ENCODE measurements at regions of chr9 and their contacts with region 1.

Region 1: GRCh38 chr9:93095205-93096130 is 549 bp upstream of the CARD19 start:
- DNase-seq: peak; percentile 98
- ATAC-seq: peak; percentile 85
- H3K4me3 ChIP-seq: peak overlapping the region; percentile 51
- H3K27ac ChIP-seq: peak overlapping the region; percentile 90
- H3K4me1 ChIP-seq: peaks cover 31% of the 10 kb centered on the region
- H3K27me3 ChIP-seq: no peaks in the 10 kb centered on the region
- CTCF ChIP-seq: no peak
- POLR2A ChIP-seq: peak; percentile 83
- RAD21 ChIP-seq: no peak

Region 2: DNA sequence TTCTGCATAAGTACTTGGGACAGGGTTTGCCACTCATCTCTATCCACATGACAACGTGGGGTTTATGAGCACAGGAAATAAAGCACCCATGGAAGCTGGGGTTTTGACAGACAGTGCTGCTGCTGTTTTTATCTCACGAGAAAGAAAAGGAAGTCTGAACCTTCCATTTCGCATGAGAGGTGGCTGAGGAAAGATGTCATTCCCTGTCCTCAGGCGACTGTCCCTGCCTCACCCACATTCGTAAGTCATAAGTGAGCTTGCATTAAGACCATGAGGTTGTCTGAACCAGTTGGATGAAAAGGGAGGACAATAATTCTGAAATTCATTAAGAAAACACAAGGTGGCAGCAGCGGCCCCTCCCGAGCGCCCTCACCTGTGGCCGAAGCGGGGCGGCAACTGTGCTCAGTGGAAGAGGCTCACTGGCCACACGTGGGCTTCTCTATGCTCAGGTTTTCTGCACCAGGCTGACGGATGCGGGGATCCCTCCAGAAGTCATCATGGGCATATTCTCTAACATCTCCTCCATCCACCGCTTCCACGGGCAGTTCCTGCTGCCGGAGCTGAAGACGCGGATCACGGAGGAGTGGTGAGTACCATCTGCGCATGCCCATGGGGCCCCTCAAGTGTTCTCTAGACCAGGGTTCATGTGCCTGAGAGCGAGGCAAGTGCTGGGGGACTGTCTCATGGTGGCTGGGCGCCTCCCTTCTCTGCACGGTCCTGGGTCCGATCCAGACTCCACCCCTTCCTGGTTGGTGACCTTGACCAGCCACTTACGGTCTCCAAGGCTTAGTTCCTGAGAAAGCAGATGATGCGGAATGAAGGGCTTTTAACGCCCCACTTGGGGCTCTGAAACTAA is 91.7 kb before region 1 on chr9:
- CTCF ChIA-PET with region 1: interaction called, 3 read pairs
- POLR2A ChIA-PET with region 1: no interaction called
- dilution Hi-C with region 1: no loop called
- in situ Hi-C with region 1: no loop called
- intact Hi-C with region 1: loop called (anchors 2 kb)
- DNase-seq: peak; percentile 22
- ATAC-seq: peak; percentile 80
- H3K4me3 ChIP-seq: no peak overlapping the region
- H3K27ac ChIP-seq: no peak overlapping the region
- H3K4me1 ChIP-seq: no peaks in the 10 kb centered on the region
- H3K27me3 ChIP-seq: peaks cover 8% of the 10 kb centered on the region; the same call in 1 of the 2 replicates
- CTCF ChIP-seq: peak; percentile 64
- POLR2A ChIP-seq: no peak
- RAD21 ChIP-seq: peak; percentile 66

Measured in IMR-90 (cell line).